ENCODE measurements at regions of chr3 and their contacts with region 1.

Region 1: GRCh38 chr3:182792901-182793662 is at the start of gene ATP11B:
- DNase-seq: peak; percentile 91
- ATAC-seq: peak; percentile 79
- H3K4me3 ChIP-seq: peak within 1 kb of the TSS; percentile 78 to 99 (median 94)
- H3K4me3 Mint-ChIP-seq: peak within 1 kb of the TSS; percentile 100
- H3K27ac ChIP-seq: peak within 1 kb of the TSS; percentile 92 to 98
- H3K27ac Mint-ChIP-seq: peak within 1 kb of the TSS; percentile 100
- H3K4me1 ChIP-seq: peaks cover 34 to 40% of the 10 kb centered on the region in 2 donors
- H3K4me1 Mint-ChIP-seq: peaks cover 39% of the 10 kb centered on the region
- H3K27me3 ChIP-seq: no peaks in the 10 kb centered on the region
- H3K27me3 Mint-ChIP-seq: no peaks in the 10 kb centered on the region
- CTCF ChIP-seq: no peak
- total RNA-seq, gene ATP11B: 81.9 and 94.6 TPM in 2 replicates

Region 2: GRCh38 chr3:182837855-182838454 is 44.9 kb after region 1 on chr3:
- CTCF ChIA-PET with region 1: interaction called, 3 read pairs
- POLR2A ChIA-PET with region 1: no interaction called
- intact Hi-C with region 1: loop called (anchors 5 kb)
- DNase-seq: peak; percentile 17
- ATAC-seq: no peak
- H3K4me3 ChIP-seq: no peak overlapping the region
- H3K4me3 Mint-ChIP-seq: no peak overlapping the region
- H3K27ac ChIP-seq: no peak overlapping the region
- H3K27ac Mint-ChIP-seq: no peak overlapping the region
- H3K4me1 ChIP-seq: no peaks in the 10 kb centered on the region
- H3K4me1 Mint-ChIP-seq: no peaks in the 10 kb centered on the region
- H3K27me3 ChIP-seq: no peaks in the 10 kb centered on the region
- H3K27me3 Mint-ChIP-seq: no peaks in the 10 kb centered on the region
- CTCF ChIP-seq: peak; percentile 56

Region 3: DNA sequence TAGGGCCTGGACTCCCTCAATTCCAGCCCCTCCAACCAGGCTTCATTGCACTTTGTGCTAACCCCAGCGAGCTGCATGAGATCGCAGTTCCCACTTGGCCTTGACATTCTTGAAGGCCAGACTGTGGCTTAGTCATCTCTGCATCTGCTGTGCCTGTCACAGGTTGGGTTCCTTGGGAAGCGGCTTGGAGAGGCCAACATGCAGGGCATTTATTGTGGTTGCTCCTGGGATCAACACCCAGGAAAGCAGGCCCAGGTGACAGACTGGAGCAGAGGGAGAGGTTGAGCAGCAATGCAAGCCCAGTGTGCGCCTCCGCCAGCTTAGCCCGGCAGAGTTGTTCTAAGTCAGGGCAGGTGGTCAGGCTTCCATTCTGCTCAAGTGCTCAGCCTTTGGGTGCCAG is 1403.5 kb after region 1 on chr3:
- CTCF ChIA-PET with region 1: no interaction called
- POLR2A ChIA-PET with region 1: interaction called, 13 read pairs
- intact Hi-C with region 1: no loop called
- DNase-seq: no peak
- ATAC-seq: no peak
- H3K4me3 ChIP-seq: no peak overlapping the region
- H3K4me3 Mint-ChIP-seq: no peak overlapping the region
- H3K27ac ChIP-seq: no peak overlapping the region
- H3K27ac Mint-ChIP-seq: no peak overlapping the region
- H3K4me1 ChIP-seq: no peaks in the 10 kb centered on the region
- H3K4me1 Mint-ChIP-seq: no peaks in the 10 kb centered on the region
- H3K27me3 ChIP-seq: no peaks in the 10 kb centered on the region
- H3K27me3 Mint-ChIP-seq: no peaks in the 10 kb centered on the region
- CTCF ChIP-seq: no peak